ENCODE measurements at regions of chr7 and their contacts with region 1.

Region 1: GRCh38 chr7:76133164-76133775 is 68.4 kb upstream of the SRRM3 start:
- DNase-seq: no peak
- H3K4me3 Mint-ChIP-seq: peak overlapping the region; percentile 17
- H3K27ac Mint-ChIP-seq: peak overlapping the region; percentile 4
- H3K4me1 Mint-ChIP-seq: peaks cover 19% of the 10 kb centered on the region
- H3K27me3 Mint-ChIP-seq: no peaks in the 10 kb centered on the region

Region 2: DNA sequence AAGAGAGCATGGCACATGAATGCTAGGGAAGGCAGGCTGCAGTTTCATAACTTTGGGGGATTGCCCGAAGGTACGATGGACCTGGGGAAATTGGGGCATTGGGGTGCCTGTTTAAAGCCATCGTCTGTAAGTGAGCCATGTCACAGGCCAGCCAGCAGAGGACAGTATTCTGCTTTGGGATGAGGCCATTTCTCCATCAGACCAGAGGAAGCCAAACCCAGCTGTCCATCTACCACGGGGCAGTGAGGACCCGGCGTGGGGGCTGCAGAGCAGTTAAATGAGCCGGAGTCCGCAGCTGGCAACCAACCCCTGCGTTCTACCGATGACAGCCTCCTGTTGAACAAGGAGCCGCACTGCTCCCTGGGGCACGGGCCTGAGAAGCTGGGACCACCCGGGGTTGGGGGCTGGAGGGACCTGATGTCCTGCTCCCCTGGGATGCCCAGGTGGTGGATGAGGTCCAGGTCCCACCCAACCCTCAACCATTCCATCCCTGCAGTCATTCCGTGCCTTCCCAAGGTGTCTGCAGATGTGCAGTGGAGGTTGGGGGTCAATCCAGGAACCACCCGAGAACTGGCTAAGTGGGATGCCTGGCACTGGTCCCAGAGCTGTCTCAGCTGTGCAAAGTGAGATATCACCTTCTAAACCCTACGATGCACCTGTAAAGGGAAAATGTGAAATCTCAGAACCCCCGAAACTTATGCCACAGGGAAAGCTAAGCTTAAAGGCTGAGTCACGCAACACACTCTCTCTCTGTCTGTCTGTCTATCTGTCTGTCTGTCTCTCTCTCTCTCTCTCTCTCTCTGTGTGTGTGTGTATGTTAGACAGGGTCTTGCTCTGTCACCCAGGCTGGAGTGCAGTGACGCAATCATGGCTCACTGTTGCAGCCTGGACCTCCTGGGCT is 266.5 kb before region 1 on chr7:
- CTCF ChIA-PET with region 1: no interaction called
- intact Hi-C with region 1: loop called (anchors 2 kb)
- DNase-seq: peak; percentile 67
- H3K4me3 Mint-ChIP-seq: no peak overlapping the region
- H3K27ac Mint-ChIP-seq: no peak overlapping the region
- H3K4me1 Mint-ChIP-seq: peaks cover 9% of the 10 kb centered on the region
- H3K27me3 Mint-ChIP-seq: no peaks in the 10 kb centered on the region

Region 3: DNA sequence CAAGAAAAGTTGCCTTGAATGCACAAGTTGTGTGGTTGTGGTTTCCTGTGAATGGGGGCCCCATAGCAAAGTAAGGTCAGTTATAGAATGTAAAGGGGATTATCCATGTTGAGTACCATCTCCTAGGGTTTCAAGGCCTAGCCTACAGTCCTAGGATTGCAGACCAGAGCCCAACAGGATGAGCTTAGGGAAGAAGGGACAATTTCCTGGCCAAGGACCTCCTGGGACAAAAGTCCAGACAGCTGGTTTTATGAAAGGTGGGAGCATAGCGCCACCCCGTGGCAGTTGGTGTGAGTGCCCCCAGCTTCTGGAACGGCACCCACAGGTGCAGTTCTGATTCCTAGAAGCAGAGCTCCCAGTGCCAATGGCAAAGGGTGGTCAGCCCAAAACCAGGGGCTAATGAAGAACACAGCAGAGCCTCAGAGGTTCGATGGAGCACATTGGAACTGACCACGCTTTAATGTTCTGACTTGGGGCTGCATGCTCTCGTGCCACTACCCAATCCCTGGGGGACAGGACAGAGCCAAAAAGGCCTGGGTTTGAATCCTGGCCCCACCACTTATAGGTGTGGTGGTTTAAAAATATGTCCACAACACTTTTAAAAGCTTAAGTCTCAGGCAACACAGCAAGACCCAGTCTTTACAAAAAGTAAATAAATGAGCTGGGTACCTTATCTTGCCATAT is 113.1 kb before region 1 on chr7:
- CTCF ChIA-PET with region 1: no interaction called
- intact Hi-C with region 1: loop called (anchors 2 kb)
- DNase-seq: peak; percentile 83
- H3K4me3 Mint-ChIP-seq: no peak overlapping the region
- H3K27ac Mint-ChIP-seq: no peak overlapping the region
- H3K4me1 Mint-ChIP-seq: peaks cover 3% of the 10 kb centered on the region
- H3K27me3 Mint-ChIP-seq: no peaks in the 10 kb centered on the region

Region 4: GRCh38 chr7:76047811-76048667 is 85.2 kb before region 1 on chr7 and contains the starts of genes MDH2 and STYXL1:
- CTCF ChIA-PET with region 1: interaction called, 3 read pairs
- intact Hi-C with region 1: loop called (anchors 1 kb)
- DNase-seq: peak; percentile 95
- H3K4me3 Mint-ChIP-seq: peak within 1 kb of the TSS; percentile 98
- H3K27ac Mint-ChIP-seq: peak within 1 kb of the TSS; percentile 96
- H3K4me1 Mint-ChIP-seq: peaks cover 54% of the 10 kb centered on the region
- H3K27me3 Mint-ChIP-seq: no peaks in the 10 kb centered on the region
- total RNA-seq, gene MDH2: 325 TPM
- total RNA-seq, gene STYXL1: 27.6 to 28.1 TPM

Region 5: GRCh38 chr7:76069238-76069638 is 64.0 kb before region 1 on chr7:
- CTCF ChIA-PET with region 1: no interaction called
- intact Hi-C with region 1: loop called (anchors 1 kb)
- DNase-seq: peak; percentile 35
- H3K4me3 Mint-ChIP-seq: no peak overlapping the region
- H3K27ac Mint-ChIP-seq: no peak overlapping the region
- H3K4me1 Mint-ChIP-seq: no peaks in the 10 kb centered on the region
- H3K27me3 Mint-ChIP-seq: no peaks in the 10 kb centered on the region

Region 6: DNA sequence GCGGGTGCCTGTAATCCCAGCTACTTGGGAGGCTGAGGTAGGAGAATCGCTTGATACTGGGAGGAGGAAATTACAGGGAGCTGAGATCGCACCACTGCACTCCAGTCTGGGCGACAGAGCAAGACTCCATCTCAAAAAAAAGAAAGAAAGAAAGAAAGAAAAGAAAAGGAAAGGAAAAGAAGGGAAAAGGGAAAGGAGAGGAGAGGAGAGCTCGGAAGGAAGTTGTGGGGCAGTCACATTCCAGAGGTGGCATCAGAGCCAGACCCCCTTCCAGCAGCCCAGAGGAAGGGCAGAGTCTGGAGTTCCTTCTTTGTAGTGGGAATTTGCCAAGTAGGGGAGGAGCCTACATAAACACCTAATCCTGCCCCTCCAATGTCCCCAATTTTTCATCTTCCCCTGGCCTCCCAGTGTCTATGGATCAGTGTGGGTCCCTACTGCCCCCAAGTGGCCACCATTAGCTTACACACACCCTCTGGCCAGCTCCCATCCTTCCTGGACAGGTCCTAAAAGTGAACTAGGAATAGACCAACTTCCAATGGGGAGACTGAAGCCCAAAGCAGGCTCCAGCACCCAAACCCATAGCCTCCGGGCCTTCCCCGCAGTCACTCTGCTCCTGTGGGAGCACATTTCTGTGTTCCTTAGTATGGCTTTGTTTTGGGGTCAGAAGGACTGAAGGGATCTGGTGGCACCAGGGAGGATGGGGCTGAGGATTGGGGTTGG is 129.6 kb after region 1 on chr7:
- CTCF ChIA-PET with region 1: no interaction called
- intact Hi-C with region 1: loop called (anchors 5 kb)
- DNase-seq: peak; percentile 60
- H3K4me3 Mint-ChIP-seq: no peak overlapping the region
- H3K27ac Mint-ChIP-seq: no peak overlapping the region
- H3K4me1 Mint-ChIP-seq: peaks cover 4% of the 10 kb centered on the region
- H3K27me3 Mint-ChIP-seq: peaks cover 21% of the 10 kb centered on the region

Measured in activated naive CD4-positive, alpha-beta T cell treated with anti-CD3 and anti-CD28 coated beads for 36 hours (primary cell).